ENCODE measurements at regions of chr4 and their contacts with region 1.

Region 1: GRCh38 chr4:123994917-123995316 is 598.3 kb downstream of the SPRY1 start:
- DNase-seq: no peak
- H3K4me3 ChIP-seq: no peak overlapping the region
- H3K27ac ChIP-seq: no peak overlapping the region
- H3K4me1 ChIP-seq: no peaks in the 10 kb centered on the region
- H3K27me3 ChIP-seq: no peaks in the 10 kb centered on the region
- CTCF ChIP-seq: no peak
- EP300 ChIP-seq: no peak
- POLR2A ChIP-seq: no peak

Region 2: DNA sequence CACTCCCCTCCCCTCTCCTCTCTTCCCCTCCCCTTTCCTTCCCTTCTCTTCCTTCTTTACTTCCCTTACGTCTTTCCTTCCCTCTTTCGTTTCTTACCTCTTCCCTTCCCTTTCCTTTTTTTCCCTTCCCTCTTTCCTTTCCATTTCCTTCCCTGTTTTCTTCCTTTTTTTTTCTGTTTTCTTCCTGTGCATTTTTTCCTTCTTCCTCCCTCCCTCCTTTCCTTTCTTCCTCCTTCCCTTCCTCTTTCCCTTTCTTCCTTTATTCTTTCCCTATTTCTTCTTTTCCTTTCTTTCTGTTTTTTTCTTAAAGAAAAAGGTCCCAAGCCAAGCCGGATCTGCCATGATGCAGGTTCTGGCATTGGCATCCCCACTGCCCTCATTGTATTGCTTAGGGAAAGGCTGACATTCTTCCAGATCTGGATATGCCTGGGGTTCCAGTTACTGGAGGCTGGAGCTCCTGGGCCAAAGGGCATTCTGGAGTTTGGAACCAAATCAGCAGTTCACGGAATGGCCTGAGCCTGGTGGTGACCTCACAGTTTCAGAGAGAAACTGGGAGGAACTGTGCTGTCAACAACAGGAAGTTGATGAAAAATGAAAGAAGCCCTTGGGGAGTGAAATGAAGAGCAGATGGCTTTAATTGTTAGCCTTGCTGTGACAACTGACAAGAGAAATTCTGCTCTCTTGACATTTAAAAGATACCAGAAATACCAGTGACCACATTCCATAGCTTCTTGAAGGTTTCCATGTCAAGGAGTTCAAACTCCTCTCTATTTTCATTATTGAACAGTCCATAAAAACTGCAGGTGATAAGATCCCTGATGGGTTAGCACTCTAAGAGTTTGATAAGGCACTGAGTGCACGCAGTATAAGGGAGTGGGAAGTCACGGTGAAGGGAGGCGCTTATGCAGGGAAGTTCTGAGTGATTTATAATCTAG is 23.7 kb after region 1 on chr4:
- intact Hi-C with region 1: loop called in 1 of 4 experiments (anchors 1 kb)
- DNase-seq: peak in 4 of 5 donors; percentile 21 to 64 (median 48)
- H3K4me3 ChIP-seq: no peak overlapping the region
- H3K27ac ChIP-seq: no peak overlapping the region
- H3K4me1 ChIP-seq: peaks cover 1% of the 10 kb centered on the region
- H3K27me3 ChIP-seq: no peaks in the 10 kb centered on the region
- CTCF ChIP-seq: no peak
- EP300 ChIP-seq: no peak
- POLR2A ChIP-seq: no peak

Measured in ovary (tissue), 10 donors.